ENCODE measurements at regions of chr6 and their contacts with region 1.

Region 1: DNA sequence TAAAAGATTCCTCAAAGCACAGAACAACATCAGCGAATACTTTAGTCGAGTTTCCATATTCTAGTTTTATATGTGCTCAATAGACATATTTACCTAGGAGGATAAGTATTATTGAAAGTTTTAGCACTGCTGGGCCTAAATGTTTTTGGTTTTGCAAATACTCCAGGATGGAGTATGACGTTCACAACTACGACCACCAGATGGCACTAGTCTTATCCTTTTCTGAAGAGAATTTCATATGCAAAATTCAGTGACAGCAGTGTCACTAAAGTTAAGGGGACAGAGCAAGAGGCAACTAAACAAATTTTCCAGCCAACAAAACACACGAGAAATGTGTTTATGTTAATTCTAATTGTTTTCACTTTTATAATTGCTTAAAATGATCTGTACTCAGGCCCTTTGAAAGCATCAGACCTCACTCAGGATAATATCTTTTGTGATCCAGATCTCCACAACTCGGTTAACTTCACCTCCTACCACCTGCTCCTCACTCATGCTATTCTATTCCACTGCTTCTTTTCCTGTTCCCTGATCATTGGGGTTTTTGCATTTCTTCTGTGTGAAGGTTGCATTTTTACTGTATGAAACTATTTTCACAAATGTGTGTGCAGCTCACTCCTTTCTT is 220.8 kb downstream of the TRDN start:
- DNase-seq: peak; percentile 82
- H3K4me3 ChIP-seq: no peak overlapping the region
- H3K27ac ChIP-seq: peak overlapping the region; percentile 39
- H3K4me1 ChIP-seq: peaks cover 3% of the 10 kb centered on the region
- H3K27me3 ChIP-seq: no peaks in the 10 kb centered on the region
- CTCF ChIP-seq: peak; percentile 80

Region 2: GRCh38 chr6:123434186-123434585 is 18.2 kb after region 1 on chr6:
- CTCF ChIA-PET with region 1: no interaction called
- POLR2A ChIA-PET with region 1: no interaction called
- intact Hi-C with region 1: no loop called
- DNase-seq: no peak
- H3K4me3 ChIP-seq: no peak overlapping the region
- H3K27ac ChIP-seq: no peak overlapping the region
- H3K4me1 ChIP-seq: peaks cover 4% of the 10 kb centered on the region
- H3K27me3 ChIP-seq: no peaks in the 10 kb centered on the region
- CTCF ChIP-seq: no peak

Region 3: DNA sequence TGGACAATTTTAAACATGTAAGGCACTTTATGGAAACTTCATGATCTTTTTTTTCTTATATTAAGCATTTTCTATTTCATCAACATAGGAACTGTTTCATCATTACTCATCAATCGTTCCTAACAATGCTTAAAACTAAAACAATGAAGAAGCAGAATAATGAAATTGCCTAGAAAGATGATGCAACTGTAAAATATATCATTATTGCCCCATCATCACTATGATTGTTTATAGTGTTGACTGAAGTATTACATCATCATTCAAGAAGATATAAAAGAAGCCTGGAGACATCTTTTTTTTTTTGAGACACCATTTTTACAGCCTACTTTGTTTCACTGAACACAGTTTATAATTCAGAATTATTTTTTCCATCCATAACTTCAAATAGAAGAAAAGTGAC is 73.6 kb after region 1 on chr6:
- CTCF ChIA-PET with region 1: no interaction called
- POLR2A ChIA-PET with region 1: no interaction called
- intact Hi-C with region 1: loop called (anchors 5 kb)
- DNase-seq: no peak
- H3K4me3 ChIP-seq: no peak overlapping the region
- H3K27ac ChIP-seq: peak overlapping the region; percentile 89
- H3K4me1 ChIP-seq: peaks cover 53% of the 10 kb centered on the region
- H3K27me3 ChIP-seq: no peaks in the 10 kb centered on the region
- CTCF ChIP-seq: no peak

Region 4: DNA sequence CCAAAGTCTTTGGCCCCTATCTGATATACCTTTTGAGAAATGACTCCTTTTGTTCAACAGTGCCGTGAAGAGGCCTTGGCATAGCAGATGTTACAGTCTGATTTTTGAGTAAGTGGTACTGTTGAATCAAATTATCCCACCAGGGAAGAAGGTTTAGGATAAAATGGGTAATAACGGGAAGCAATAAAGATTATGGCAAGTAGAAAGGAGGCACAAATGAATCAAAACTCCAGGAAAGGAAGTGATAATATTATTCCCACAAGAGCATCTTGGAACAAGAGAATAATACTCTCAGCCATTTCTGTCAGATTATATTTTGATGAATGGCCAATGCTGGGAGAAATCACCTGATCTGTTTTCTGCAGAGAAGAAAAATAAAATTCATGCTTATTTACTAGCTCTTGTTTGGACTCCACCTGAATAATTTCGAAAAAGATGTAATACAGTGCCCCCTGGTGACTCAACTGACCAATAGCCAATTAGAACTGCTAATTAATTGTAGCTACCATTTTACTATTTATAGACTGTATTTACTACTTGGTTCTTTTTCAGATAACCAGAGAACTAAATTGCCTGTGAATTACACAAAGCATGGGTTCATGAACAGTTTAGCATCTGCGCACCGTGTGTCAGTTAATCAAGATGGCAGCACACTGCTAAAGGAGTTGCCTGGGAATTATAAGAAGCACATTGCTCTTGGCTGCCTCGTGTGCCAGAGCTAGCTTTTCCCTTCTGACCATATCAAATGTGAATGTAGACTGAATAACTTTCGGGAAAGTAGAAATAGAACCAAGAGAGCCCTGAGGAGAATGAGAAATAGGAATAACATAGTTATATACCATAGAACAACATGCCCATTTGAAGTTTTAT is 299.3 kb after region 1 on chr6:
- CTCF ChIA-PET with region 1: interaction called, 11 read pairs
- POLR2A ChIA-PET with region 1: no interaction called
- intact Hi-C with region 1: loop called (anchors 1 kb)
- DNase-seq: peak; percentile 81
- H3K4me3 ChIP-seq: no peak overlapping the region
- H3K27ac ChIP-seq: peak overlapping the region; percentile 71
- H3K4me1 ChIP-seq: peaks cover 29% of the 10 kb centered on the region
- H3K27me3 ChIP-seq: no peaks in the 10 kb centered on the region
- CTCF ChIP-seq: peak; percentile 77

Region 5: DNA sequence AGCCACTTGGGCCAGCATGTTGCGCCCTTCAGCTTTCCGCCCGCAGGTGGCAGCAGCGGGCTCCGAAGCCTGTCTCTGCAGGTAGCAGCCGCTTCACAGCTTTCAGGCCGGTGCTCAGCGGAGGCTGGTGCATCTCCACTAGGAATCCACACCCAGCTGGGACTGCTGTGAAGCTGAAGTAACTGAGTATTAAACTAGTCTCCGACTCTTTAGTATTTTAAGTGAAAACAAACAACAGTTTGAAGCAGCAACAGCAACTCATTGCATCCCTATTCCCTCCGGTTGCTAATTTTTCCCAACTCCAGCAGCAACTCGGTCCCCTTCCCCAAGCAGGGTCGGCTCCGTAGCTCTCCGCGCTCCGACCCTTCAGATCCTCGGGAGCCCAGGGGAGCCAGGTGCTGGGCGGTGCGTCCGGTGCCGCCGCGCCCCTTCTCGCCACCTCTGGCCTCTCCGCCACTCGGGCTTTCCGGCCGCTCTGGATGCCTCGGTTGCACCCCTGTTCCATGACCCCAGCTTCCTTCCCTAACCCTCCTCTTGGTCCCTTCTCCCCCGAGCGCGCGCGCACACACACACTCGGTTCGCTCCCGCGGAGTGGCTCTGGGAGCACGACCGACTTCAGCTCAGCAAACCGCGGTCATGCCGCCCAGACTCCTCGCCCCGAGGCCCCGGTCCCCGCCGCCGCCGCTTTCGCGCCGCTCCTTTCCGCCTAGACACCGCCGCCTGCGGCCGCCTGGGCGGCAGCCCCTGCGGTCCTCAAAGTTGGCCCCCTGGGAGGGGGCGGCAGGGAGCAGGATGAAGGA is 386.9 kb after region 1 on chr6:
- CTCF ChIA-PET with region 1: interaction called, 3 read pairs
- POLR2A ChIA-PET with region 1: no interaction called
- intact Hi-C with region 1: loop called (anchors 10 kb)
- DNase-seq: peak; percentile 91
- H3K4me3 ChIP-seq: peak overlapping the region; percentile 66
- H3K27ac ChIP-seq: peak overlapping the region; percentile 15
- H3K4me1 ChIP-seq: peaks cover 7% of the 10 kb centered on the region
- H3K27me3 ChIP-seq: peaks cover 42% of the 10 kb centered on the region
- CTCF ChIP-seq: peak; percentile 98

Region 6: DNA sequence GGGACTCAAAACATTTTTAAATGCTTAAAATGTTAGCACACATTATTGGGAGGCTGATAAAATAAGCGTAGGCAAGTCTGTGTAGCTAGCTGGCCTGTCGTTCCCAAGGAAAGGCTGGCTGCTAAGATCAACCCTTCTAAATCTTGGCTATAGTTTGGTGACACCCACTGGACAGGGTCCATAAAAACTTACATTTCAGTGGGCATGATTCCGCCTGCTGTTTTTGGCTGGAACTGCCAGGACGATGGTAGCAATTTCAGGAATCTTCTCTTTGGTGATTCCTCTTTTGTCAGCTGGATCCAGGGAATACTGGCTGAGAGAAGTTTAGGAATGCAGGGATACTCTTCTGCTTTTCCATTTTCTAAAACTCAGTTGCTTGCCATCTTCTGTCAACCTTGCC is 549.9 kb after region 1 on chr6:
- CTCF ChIA-PET with region 1: no interaction called
- POLR2A ChIA-PET with region 1: no interaction called
- intact Hi-C with region 1: loop called (anchors 10 kb)
- DNase-seq: peak; percentile 34
- H3K4me3 ChIP-seq: no peak overlapping the region
- H3K27ac ChIP-seq: no peak overlapping the region
- H3K4me1 ChIP-seq: no peaks in the 10 kb centered on the region
- H3K27me3 ChIP-seq: no peaks in the 10 kb centered on the region
- CTCF ChIP-seq: peak; percentile 44